Head of caudate nucleus (tissue), 42 donors: ENCODE measurements at regions of chr5 and their contacts with region 1.

Region 1: DNA sequence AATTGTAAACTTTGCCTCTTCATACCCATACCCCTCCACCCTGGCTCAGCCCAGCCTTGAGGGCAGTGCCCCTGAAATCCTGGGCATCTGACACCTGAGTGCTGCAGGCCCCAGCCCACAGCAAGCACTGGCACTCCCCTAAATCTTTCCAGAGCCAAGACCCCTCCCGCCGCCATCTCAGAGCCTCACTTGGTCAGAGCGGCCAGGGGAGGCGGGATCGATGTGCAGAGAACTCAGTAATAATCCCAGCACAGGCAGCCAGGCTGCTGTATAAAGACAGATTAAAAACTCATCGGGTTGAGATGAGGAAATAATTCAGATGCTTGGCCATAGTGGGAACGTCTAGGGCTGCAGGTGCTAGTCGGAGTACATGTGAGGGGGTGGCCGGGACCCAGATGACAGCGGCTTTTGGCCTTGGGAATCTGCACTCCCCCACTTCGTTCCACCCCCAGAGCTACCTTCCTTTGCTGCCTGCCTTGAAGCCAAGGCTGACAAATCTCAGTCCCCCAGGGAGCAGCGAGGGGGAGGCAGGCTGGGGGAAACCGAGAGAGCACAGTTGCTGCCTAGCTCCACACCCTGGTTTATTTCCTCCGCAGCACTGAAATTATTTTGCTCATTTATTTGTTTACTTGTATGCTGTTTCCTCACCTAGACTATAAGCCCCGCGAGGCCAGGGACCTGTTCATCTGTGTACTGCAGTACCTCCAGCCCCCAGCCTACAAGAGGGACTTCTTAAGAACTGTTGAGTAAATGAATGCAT is 19.5 kb upstream of the ARAP3 start:
- DNase-seq: peak in 39 of 42 donors; percentile 27 to 88 (median 64)

Region 2: GRCh38 chr5:141821361-141821925 is 119.9 kb after region 1 on chr5:
- intact Hi-C with region 1: loop called (anchors 5 kb)
- DNase-seq: peak in 36 of 42 donors; percentile 29 to 86 (median 60)